Panc1 (cell line): ENCODE measurements at regions of chr4 and their contacts with region 1.

Region 1: DNA sequence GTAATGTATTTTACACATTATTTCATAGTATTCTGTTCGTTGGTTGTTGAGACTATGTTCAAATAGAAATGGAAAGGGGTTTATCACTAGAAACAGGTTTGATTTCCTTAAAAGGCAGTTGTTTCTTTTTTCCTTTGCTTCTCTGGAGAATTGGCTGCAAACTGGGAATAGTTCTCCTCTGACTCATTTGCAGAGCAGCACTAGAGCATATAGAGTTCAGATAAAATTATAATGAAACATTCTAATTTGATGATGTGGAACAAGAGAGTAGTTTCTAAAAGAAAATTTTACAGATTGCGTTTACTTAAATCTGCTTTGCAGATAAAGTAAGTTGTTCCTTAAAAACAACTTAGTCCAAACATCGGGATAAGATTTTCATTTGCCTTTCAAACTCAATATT is 29.7 kb downstream of the SYNPO2 start:
- DNase-seq: no peak
- ATAC-seq: no peak
- H3K4me3 ChIP-seq: no peak overlapping the region
- H3K27ac ChIP-seq: no peak overlapping the region
- H3K4me1 ChIP-seq: no peaks in the 10 kb centered on the region
- H3K27me3 ChIP-seq: no peaks in the 10 kb centered on the region; the same call in 1 of the 2 replicates
- CTCF ChIP-seq: no peak

Region 2: DNA sequence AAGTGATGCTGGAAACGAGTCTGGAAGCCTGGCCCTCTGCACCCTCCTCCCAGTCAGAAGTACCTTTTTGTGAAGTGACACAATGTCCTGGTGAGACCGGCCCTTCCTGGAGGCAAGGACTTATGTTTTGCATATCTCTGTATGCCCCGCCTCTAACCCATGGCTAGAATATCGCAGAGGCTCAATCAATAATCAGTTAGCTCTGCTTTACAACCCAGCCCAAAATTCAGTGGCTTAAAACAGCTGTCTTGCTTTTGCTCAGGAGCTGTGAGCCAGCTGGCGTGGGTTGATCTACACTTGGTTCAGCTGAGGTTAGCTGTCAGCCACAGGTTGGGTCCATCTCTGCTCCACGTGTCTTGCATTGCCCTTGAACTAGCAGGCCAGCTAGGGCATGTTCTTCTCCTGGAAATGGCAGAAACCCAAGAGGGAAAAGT is 332.0 kb before region 1 on chr4:
- CTCF ChIA-PET with region 1: no interaction called
- POLR2A ChIA-PET with region 1: interaction called, 16 read pairs
- in situ Hi-C with region 1: no loop called
- intact Hi-C with region 1: no loop called
- DNase-seq: no peak
- ATAC-seq: no peak
- H3K4me3 ChIP-seq: no peak overlapping the region
- H3K27ac ChIP-seq: no peak overlapping the region
- H3K4me1 ChIP-seq: no peaks in the 10 kb centered on the region
- H3K27me3 ChIP-seq: no peaks in the 10 kb centered on the region
- CTCF ChIP-seq: no peak